Activated B cell treated with CpG ODN at 0.5 μM for 24 hours (primary cell): ENCODE measurements at regions of chr18 and their contacts with region 1.

Region 1: GRCh38 chr18:8654503-8655451 is 45.5 kb downstream of the RAB12 start:
- DNase-seq: no peak
- ATAC-seq: no peak
- H3K4me3 Mint-ChIP-seq: no peak overlapping the region
- H3K27ac Mint-ChIP-seq: no peak overlapping the region
- H3K4me1 Mint-ChIP-seq: peaks cover 6% of the 10 kb centered on the region
- H3K27me3 Mint-ChIP-seq: no peaks in the 10 kb centered on the region
- CTCF ChIP-seq: peak; percentile 67

Region 2: GRCh38 chr18:8681196-8681595 is 26.4 kb after region 1 on chr18:
- CTCF ChIA-PET with region 1: no interaction called
- POLR2A ChIA-PET with region 1: no interaction called
- intact Hi-C with region 1: no loop called
- DNase-seq: no peak
- ATAC-seq: no peak
- H3K4me3 Mint-ChIP-seq: no peak overlapping the region
- H3K27ac Mint-ChIP-seq: no peak overlapping the region
- H3K4me1 Mint-ChIP-seq: no peaks in the 10 kb centered on the region
- H3K27me3 Mint-ChIP-seq: no peaks in the 10 kb centered on the region
- CTCF ChIP-seq: no peak

Region 3: DNA sequence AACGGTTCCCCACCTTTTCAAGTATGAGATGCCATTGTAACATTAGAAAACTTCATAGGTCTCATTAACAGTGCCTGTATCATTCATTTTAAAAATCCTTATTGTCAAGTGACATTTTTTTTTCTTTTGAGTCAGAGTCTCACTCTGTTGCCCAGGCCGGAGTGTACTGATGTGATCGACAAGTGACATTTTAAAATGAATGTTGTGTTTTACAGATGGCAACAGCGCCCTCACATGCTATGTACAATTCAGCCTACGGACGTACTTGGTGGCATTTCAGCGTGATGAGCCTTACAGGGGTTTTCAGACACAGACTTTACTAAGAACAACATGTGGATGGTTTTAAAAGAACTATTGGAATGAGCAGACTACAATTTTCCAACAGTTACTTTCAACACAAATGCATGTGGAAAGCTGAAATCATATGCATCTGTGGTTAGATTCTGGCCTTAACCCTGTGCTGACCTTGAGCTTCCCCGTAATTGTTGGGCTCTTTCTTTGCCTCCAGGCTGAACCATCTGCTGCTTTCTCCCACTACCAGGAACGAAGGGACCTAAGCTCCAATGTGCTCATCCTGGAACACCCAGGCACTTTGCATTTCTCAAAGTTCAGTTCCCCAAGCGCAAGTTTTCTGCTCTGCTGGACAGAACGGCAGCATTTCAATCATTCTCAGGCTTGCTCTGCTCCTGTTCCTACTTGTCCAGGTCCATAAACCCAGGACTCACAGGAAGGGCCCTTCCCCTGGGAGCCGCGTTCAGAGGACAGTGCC is 327.8 kb after region 1 on chr18:
- CTCF ChIA-PET with region 1: interaction called, 62 read pairs
- POLR2A ChIA-PET with region 1: no interaction called
- intact Hi-C with region 1: loop called (anchors 1 kb)
- DNase-seq: no peak
- ATAC-seq: peak; percentile 65
- H3K4me3 Mint-ChIP-seq: no peak overlapping the region
- H3K27ac Mint-ChIP-seq: no peak overlapping the region
- H3K4me1 Mint-ChIP-seq: peaks cover 20% of the 10 kb centered on the region
- H3K27me3 Mint-ChIP-seq: no peaks in the 10 kb centered on the region
- CTCF ChIP-seq: no peak

Region 4: GRCh38 chr18:9516437-9517064 is 861.8 kb after region 1 on chr18:
- CTCF ChIA-PET with region 1: interaction called, 14 read pairs
- POLR2A ChIA-PET with region 1: no interaction called
- intact Hi-C with region 1: loop called (anchors 1 kb)
- DNase-seq: no peak
- ATAC-seq: peak; percentile 64
- H3K4me3 Mint-ChIP-seq: no peak overlapping the region
- H3K27ac Mint-ChIP-seq: no peak overlapping the region
- H3K4me1 Mint-ChIP-seq: peaks cover 5% of the 10 kb centered on the region
- H3K27me3 Mint-ChIP-seq: no peaks in the 10 kb centered on the region
- CTCF ChIP-seq: peak; percentile 89